ENCODE measurements at regions of chr6 and their contacts with region 1.

Region 1: GRCh38 chr6:27146706-27147505 is 100.6 kb upstream of the PRSS16 start:
- DNase-seq: peak; percentile 83
- ATAC-seq: peak; percentile 71
- H3K4me3 Mint-ChIP-seq: no peak overlapping the region
- H3K27ac Mint-ChIP-seq: no peak overlapping the region
- H3K4me1 Mint-ChIP-seq: peaks cover 18% of the 10 kb centered on the region
- H3K27me3 Mint-ChIP-seq: no peaks in the 10 kb centered on the region

Region 2: GRCh38 chr6:26183581-26184366 is 963.1 kb before region 1 on chr6:
- POLR2A ChIA-PET with region 1: interaction called, 12 read pairs
- DNase-seq: peak; percentile 78
- ATAC-seq: peak; percentile 85
- H3K4me3 Mint-ChIP-seq: peak overlapping the region; percentile 96
- H3K27ac Mint-ChIP-seq: peak overlapping the region; percentile 99
- H3K4me1 Mint-ChIP-seq: peaks cover 48% of the 10 kb centered on the region
- H3K27me3 Mint-ChIP-seq: no peaks in the 10 kb centered on the region

Region 3: DNA sequence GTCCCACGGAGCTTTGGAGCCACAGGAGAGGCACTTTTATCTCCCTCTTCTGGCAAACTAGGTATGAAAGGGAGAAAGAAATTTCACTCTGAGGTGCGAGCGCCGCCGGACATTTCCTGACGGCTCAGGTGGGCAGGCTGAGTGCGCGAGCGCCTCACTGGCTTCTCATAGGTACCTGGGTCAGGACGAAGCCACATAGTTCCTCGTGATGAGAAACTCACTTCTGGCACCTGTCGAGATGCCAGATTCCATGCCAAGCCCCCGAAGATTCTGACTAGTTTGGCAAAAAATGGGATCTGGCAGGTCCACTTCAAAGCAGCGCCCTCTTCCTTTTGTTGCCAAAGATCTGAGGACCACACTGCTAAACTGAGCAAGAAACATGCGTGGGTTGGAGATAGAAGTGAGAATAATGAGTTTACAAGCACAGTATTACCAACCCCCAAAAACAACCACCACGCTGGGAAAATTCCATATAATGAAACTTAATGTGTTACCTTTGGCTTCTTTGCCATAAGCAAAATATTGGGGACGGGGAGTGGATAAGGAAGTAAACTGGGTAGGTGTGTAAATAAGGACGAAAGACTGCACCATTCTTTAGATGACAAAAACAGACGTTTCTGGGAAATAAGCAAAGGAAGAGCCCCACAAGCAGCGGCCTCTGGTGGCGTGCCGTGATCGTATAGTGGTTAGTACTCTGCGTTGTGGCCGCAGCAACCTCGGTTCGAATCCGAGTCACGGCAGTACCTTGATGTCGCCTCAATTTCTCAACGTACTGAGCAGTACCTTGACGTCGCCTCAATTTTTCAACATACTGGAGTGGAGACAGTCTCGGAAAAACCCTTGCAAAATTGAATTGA is 10.8 kb after region 1 on chr6:
- POLR2A ChIA-PET with region 1: interaction called, 93 read pairs
- DNase-seq: peak; percentile 78
- ATAC-seq: peak; percentile 80
- H3K4me3 Mint-ChIP-seq: peak overlapping the region; percentile 69
- H3K27ac Mint-ChIP-seq: peak overlapping the region; percentile 70
- H3K4me1 Mint-ChIP-seq: peaks cover 43% of the 10 kb centered on the region
- H3K27me3 Mint-ChIP-seq: no peaks in the 10 kb centered on the region

Region 4: GRCh38 chr6:27472617-27473400 is 325.9 kb after region 1 on chr6 and contains the start of gene ZNF184:
- POLR2A ChIA-PET with region 1: interaction called, 11 read pairs
- DNase-seq: peak; percentile 85
- ATAC-seq: peak; percentile 87
- H3K4me3 Mint-ChIP-seq: peak within 1 kb of the TSS; percentile 92
- H3K27ac Mint-ChIP-seq: peak within 1 kb of the TSS; percentile 95
- H3K4me1 Mint-ChIP-seq: peaks cover 34% of the 10 kb centered on the region
- H3K27me3 Mint-ChIP-seq: no peaks in the 10 kb centered on the region
- total RNA-seq, gene ZNF184: 13.1 to 14.1 TPM

Region 5: DNA sequence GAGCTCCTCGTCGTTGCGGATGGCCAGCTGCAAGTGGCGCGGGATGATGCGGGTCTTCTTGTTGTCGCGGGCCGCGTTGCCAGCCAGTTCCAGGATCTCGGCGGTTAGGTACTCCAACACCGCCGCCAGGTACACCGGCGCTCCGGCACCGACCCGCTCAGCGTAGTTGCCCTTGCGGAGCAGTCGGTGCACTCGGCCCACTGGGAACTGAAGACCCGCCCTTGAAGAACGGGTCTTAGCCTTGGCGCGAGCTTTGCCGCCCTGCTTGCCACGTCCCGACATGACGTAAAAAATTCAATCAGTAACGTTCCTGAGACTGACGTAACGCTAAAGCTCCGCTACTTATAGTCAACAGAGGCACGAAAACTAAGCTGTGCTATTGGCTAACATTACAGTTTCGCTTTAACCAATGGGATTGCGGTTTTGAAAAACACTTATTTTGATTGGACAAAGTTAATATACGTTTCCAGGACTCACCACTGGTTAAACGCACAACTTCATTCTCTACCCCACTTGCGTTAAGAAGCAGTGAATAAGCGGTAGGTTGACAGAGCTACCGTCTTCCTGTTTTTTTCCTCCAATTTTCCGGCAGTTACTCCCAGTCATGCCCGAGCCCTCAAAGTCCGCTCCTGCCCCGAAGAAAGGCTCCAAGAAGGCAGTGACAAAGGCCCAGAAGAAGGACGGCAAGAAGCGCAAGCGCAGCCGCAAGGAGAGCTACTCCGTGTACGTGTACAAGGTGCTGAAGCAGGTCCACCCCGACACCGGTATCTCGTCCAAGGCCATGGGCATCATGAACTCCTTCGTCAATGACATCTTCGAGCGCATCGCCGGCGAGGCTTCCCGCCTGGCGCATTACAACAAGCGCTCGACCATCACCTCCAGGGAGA is 691.4 kb after region 1 on chr6:
- POLR2A ChIA-PET with region 1: interaction called, 66 read pairs
- DNase-seq: peak; percentile 84
- ATAC-seq: peak; percentile 74
- H3K4me3 Mint-ChIP-seq: no peak overlapping the region
- H3K27ac Mint-ChIP-seq: no peak overlapping the region
- H3K4me1 Mint-ChIP-seq: peaks cover 26% of the 10 kb centered on the region
- H3K27me3 Mint-ChIP-seq: peaks cover 2% of the 10 kb centered on the region

Region 6: GRCh38 chr6:28923318-28924102 is 1776.6 kb after region 1 on chr6 and contains the start of gene TRIM27:
- POLR2A ChIA-PET with region 1: interaction called, 10 read pairs
- DNase-seq: peak; percentile 90
- ATAC-seq: peak; percentile 82
- H3K4me3 Mint-ChIP-seq: peak within 1 kb of the TSS; percentile 96
- H3K27ac Mint-ChIP-seq: peak within 1 kb of the TSS; percentile 95
- H3K4me1 Mint-ChIP-seq: peaks cover 22% of the 10 kb centered on the region
- H3K27me3 Mint-ChIP-seq: no peaks in the 10 kb centered on the region
- total RNA-seq, gene TRIM27: 64.4 to 67.1 TPM

Measured in activated naive CD8-positive, alpha-beta T cell treated with anti-CD3 and anti-CD28 coated beads, Interleukin-2, amount 10 ng/mL, durations not matched to agents 7 days and 5 days (primary cell).